Gastrocnemius medialis (tissue), 4 donors: ENCODE measurements at regions of chr13 and their contacts with region 1.

Region 1: GRCh38 chr13:112873851-112874750 is 94.9 kb upstream of the MCF2L start:
- DNase-seq: peak; percentile 33 to 61
- ATAC-seq: peak; percentile 89 to 95
- H3K4me3 ChIP-seq: no peak overlapping the region
- H3K27ac ChIP-seq: peak overlapping the region; percentile 8 to 40 (median 22)
- H3K4me1 ChIP-seq: peaks cover 0 to 3% of the 10 kb centered on the region in 2 donors
- H3K27me3 ChIP-seq: no peaks in the 10 kb centered on the region
- CTCF ChIP-seq: peak; percentile 85 to 93 (median 90)
- POLR2A ChIP-seq: no peak

Region 2: DNA sequence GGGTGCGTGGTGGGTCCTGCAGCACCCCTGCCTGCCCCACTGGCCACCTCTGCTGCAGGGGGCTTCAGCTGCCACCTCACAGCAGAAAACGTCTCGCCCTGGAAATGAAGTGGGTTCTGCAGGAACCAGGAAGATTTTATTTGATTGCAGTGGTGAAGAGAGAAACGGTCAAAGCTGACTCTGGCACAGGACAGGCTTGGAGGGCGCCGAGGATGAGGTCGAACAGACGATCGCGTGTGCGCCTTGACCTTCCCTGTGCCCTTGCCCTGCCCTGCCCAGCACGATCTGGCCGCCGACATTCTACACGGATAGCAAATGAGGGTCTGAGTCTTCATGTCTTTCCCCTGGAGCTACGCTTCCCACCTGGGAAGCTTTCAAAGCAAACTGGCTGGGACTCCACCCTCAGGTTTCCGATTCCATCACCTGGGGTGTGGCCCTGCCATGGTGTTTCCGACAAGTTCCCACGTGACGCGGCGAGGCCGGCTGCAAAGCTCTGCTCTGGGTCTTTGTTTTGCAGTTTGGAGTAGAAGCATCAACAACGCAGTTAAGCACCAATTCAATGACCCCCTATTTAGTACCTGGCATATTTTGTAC is 235.8 kb before region 1 on chr13:
- in situ Hi-C with region 1: loop called (anchors 10 to 25 kb)
- intact Hi-C with region 1: loop called (anchors 1 kb)
- DNase-seq: no peak
- ATAC-seq: no peak
- H3K4me3 ChIP-seq: no peak overlapping the region
- H3K27ac ChIP-seq: no peak overlapping the region
- H3K4me1 ChIP-seq: no peaks in the 10 kb centered on the region
- H3K27me3 ChIP-seq: peaks cover 18 to 34% (median 22%) of the 10 kb centered on the region in 3 donors
- CTCF ChIP-seq: no peak
- POLR2A ChIP-seq: no peak

Region 3: DNA sequence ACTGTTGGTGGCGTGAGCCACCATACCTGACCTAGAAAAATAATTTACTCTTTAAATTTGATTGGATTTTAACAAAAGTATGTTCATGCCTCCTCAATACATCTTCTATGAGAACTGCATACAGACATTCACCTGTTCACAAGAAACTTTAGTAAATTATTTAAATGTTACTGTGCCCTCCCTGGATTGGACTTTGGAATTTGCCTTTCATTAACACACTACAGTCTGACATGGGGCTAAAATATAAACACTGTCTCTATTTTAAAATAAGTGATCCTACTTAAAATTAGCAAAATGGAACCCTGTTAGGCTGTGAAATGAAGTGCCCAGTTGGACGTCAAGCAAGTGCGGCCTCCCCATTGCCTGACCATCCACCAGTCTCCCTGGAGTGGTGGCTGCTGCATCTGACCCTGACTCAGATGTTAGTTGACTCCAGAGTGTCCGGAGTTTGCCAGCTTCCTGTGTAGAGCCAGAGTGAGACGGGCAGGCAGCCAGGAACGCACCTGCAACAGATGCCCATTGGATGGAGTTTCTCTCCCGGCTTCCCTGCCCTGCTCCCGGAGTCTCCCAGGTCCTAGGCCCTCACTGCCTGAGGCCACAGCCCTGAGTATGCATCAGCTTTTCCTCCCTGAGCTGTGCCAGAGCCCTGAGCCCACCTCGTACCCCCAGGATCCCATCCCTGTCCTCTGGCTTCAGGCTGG is 230.2 kb before region 1 on chr13:
- in situ Hi-C with region 1: loop called (anchors 10 to 25 kb)
- intact Hi-C with region 1: loop called (anchors 1 kb)
- DNase-seq: no peak
- ATAC-seq: no peak
- H3K4me3 ChIP-seq: no peak overlapping the region
- H3K27ac ChIP-seq: no peak overlapping the region
- H3K4me1 ChIP-seq: no peaks in the 10 kb centered on the region
- H3K27me3 ChIP-seq: peaks cover 4 to 9% (median 4%) of the 10 kb centered on the region in 3 donors
- CTCF ChIP-seq: no peak
- POLR2A ChIP-seq: no peak

Region 4: DNA sequence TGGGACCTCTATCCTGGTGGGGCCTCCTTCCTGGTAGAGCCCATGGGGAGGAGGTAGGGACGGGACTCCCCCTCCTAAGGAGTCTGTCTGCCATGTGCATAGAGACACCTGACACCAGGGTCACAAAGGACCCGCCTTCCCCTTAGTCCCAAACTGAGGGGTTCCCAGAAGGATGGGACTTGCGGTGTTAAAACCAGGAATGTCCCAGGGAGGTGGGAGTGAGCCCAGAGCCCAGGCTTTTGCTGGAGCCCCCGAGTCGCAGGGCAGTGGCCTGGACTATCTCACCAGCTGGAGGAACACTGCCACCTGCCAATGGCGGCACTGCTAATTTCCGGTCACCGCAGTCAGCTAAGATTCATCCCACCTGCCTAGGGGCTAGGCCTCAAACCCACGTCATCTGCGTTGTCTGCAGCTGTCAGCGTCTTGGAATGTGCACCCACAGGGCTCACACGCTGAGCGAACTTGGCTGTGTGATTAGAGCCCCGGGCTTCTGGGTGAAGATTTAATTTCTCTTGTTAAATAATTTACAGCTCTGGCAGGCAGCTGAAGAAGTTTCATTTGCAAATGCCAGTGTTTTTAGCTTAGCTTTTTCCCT is 216.2 kb before region 1 on chr13:
- in situ Hi-C with region 1: no loop called
- intact Hi-C with region 1: no loop called
- DNase-seq: no peak
- ATAC-seq: no peak
- H3K4me3 ChIP-seq: no peak overlapping the region
- H3K27ac ChIP-seq: no peak overlapping the region
- H3K4me1 ChIP-seq: no peaks in the 10 kb centered on the region
- H3K27me3 ChIP-seq: no peaks in the 10 kb centered on the region
- CTCF ChIP-seq: no peak
- POLR2A ChIP-seq: no peak

Region 5: GRCh38 chr13:114259974-114260373 is 1385.9 kb after region 1 on chr13:
- in situ Hi-C with region 1: no loop called
- intact Hi-C with region 1: no loop called
- DNase-seq: no peak
- ATAC-seq: peak; percentile 42 to 56
- H3K4me3 ChIP-seq: no peak overlapping the region
- H3K27ac ChIP-seq: peak overlapping the region in 1 of 4 donors; percentile 42
- H3K4me1 ChIP-seq: peaks cover 6 to 10% of the 10 kb centered on the region in 2 donors
- H3K27me3 ChIP-seq: no peaks in the 10 kb centered on the region
- CTCF ChIP-seq: no peak
- POLR2A ChIP-seq: no peak